Activated CD4-positive, alpha-beta memory T cell treated with anti-CD3 and anti-CD28 coated beads, Interleukin-2, amount 10 ng/mL, durations not matched to agents 7 days and 5 days (primary cell): ENCODE measurements at regions of chr20 and their contacts with region 1.

Region 1: GRCh38 chr20:45934586-45935415 is at the start of gene PCIF1:
- DNase-seq: peak; percentile 98
- H3K4me3 Mint-ChIP-seq: peak within 1 kb of the TSS; percentile 87
- H3K27ac Mint-ChIP-seq: peak within 1 kb of the TSS; percentile 96
- H3K4me1 Mint-ChIP-seq: peaks cover 29% of the 10 kb centered on the region
- H3K27me3 Mint-ChIP-seq: no peaks in the 10 kb centered on the region
- total RNA-seq, gene PCIF1: 44.2 to 45.7 TPM

Region 2: GRCh38 chr20:45685896-45686295 is 248.9 kb before region 1 on chr20:
- CTCF ChIA-PET with region 1: no interaction called
- POLR2A ChIA-PET with region 1: no interaction called
- DNase-seq: no peak
- H3K4me3 Mint-ChIP-seq: no peak overlapping the region
- H3K27ac Mint-ChIP-seq: no peak overlapping the region
- H3K4me1 Mint-ChIP-seq: no peaks in the 10 kb centered on the region
- H3K27me3 Mint-ChIP-seq: peaks cover 2% of the 10 kb centered on the region

Region 3: DNA sequence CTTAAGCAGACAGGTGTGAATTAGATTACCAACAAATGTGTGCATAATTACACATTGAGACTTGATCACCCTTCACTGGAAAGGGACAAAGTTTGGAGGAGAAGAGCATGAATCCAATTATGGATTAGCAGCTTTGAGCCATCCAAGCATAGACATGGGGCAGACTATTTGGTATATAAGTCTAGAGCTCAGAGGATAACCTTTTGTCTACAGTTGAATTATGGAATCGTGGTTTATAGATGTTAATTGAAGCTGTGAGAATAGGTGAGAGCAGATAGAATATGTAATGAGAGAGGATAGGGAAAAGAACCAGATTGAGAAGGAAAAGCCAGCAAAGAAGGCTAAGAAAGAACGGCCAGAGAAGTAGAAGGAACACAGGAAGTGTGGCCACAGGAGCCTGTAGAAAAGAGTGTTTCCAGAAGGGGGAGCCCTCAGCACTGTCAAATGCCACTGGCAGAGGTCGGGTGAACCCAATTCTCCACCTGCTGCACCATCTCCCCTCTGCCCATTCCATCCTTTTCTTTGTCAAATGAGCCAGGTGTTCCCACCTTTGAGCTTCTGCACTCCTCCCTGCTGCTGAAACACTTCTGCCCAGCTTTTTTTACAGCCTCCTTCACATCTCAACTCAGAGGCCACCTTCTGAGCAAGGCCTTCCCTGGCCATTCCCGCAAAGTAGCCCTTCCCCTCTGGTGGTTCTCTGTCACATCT is 135.7 kb before region 1 on chr20:
- CTCF ChIA-PET with region 1: interaction called, 14 read pairs
- POLR2A ChIA-PET with region 1: interaction called, 6 read pairs
- DNase-seq: peak; percentile 74
- H3K4me3 Mint-ChIP-seq: no peak overlapping the region
- H3K27ac Mint-ChIP-seq: peak overlapping the region; percentile 33
- H3K4me1 Mint-ChIP-seq: peaks cover 22% of the 10 kb centered on the region
- H3K27me3 Mint-ChIP-seq: no peaks in the 10 kb centered on the region

Region 4: GRCh38 chr20:45823949-45824835 is 110.6 kb before region 1 on chr20:
- CTCF ChIA-PET with region 1: interaction called, 6 read pairs
- POLR2A ChIA-PET with region 1: interaction called, 15 read pairs
- DNase-seq: peak; percentile 59
- H3K4me3 Mint-ChIP-seq: peak overlapping the region; percentile 66
- H3K27ac Mint-ChIP-seq: no peak overlapping the region
- H3K4me1 Mint-ChIP-seq: peaks cover 16% of the 10 kb centered on the region
- H3K27me3 Mint-ChIP-seq: peaks cover 30% of the 10 kb centered on the region

Region 5: GRCh38 chr20:45845452-45845851 is 89.3 kb before region 1 on chr20:
- CTCF ChIA-PET with region 1: no interaction called
- POLR2A ChIA-PET with region 1: no interaction called
- DNase-seq: no peak
- H3K4me3 Mint-ChIP-seq: no peak overlapping the region
- H3K27ac Mint-ChIP-seq: no peak overlapping the region
- H3K4me1 Mint-ChIP-seq: peaks cover 2% of the 10 kb centered on the region
- H3K27me3 Mint-ChIP-seq: no peaks in the 10 kb centered on the region

Region 6: GRCh38 chr20:45857114-45857881 is 77.5 kb before region 1 on chr20 and contains the starts of genes ACOT8 and ZSWIM3:
- CTCF ChIA-PET with region 1: no interaction called
- POLR2A ChIA-PET with region 1: interaction called, 37 read pairs
- DNase-seq: peak; percentile 96
- H3K4me3 Mint-ChIP-seq: peak within 1 kb of the TSS; percentile 98
- H3K27ac Mint-ChIP-seq: peak within 1 kb of the TSS; percentile 99
- H3K4me1 Mint-ChIP-seq: peaks cover 55% of the 10 kb centered on the region
- H3K27me3 Mint-ChIP-seq: no peaks in the 10 kb centered on the region
- total RNA-seq, gene ACOT8: 36.0 to 36.5 TPM
- total RNA-seq, gene ZSWIM3: 5.5 to 5.7 TPM

Region 7: GRCh38 chr20:45890985-45891983 is 43.5 kb before region 1 on chr20 and contains the starts of genes CTSA and NEURL2:
- CTCF ChIA-PET with region 1: no interaction called
- POLR2A ChIA-PET with region 1: interaction called, 42 read pairs
- DNase-seq: peak; percentile 87
- H3K4me3 Mint-ChIP-seq: peak within 1 kb of the TSS; percentile 88
- H3K27ac Mint-ChIP-seq: peak within 1 kb of the TSS; percentile 40
- H3K4me1 Mint-ChIP-seq: peaks cover 36% of the 10 kb centered on the region
- H3K27me3 Mint-ChIP-seq: peaks cover 5% of the 10 kb centered on the region
- total RNA-seq, gene CTSA: 64.3 to 64.6 TPM
- total RNA-seq, gene NEURL2: 1.0 to 1.6 TPM

Region 8: DNA sequence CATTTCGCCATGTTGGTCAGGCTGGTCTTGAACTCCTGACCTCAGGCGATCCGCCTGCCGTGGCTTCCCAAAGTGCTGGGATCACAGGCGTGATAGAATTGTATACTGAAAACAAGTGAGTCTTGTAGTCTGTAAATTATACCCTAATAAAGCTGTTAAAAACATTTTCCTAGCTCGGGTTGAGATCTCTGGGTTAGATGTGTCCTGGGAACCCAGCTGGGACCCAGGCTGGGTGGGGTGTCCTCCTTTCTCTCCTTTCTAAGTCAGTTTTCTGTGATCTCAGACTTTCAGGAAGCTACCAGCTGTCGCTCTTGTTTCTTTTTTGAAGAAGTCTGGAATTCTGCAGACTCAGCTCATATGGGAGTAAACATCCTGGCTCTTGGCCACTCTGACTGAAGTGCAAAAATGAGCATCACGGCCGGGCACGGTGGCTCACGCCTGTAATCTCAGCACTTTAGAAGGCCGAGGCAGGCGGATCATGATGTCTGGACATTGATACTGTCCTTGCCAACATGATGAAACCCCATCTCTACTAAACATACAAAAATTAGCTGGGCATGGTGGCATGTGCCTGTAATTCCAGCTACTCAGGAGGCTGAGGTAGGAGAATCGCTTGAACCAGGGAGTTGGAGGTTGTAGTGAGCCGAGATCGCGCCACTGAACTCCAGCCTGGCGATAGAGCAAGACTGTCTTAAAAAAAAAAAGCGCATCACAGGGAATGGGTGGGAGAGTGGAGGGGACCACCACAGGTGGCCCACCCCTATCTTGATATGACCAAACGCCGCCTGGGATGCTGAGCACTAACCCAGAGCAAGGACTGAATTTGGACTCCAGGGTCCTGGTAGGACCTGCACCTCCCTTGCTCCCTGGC is 10.2 kb before region 1 on chr20:
- CTCF ChIA-PET with region 1: interaction called, 4 read pairs
- POLR2A ChIA-PET with region 1: interaction called, 26 read pairs
- DNase-seq: no peak
- H3K4me3 Mint-ChIP-seq: no peak overlapping the region
- H3K27ac Mint-ChIP-seq: no peak overlapping the region
- H3K4me1 Mint-ChIP-seq: peaks cover 3% of the 10 kb centered on the region
- H3K27me3 Mint-ChIP-seq: peaks cover 20% of the 10 kb centered on the region

Region 9: DNA sequence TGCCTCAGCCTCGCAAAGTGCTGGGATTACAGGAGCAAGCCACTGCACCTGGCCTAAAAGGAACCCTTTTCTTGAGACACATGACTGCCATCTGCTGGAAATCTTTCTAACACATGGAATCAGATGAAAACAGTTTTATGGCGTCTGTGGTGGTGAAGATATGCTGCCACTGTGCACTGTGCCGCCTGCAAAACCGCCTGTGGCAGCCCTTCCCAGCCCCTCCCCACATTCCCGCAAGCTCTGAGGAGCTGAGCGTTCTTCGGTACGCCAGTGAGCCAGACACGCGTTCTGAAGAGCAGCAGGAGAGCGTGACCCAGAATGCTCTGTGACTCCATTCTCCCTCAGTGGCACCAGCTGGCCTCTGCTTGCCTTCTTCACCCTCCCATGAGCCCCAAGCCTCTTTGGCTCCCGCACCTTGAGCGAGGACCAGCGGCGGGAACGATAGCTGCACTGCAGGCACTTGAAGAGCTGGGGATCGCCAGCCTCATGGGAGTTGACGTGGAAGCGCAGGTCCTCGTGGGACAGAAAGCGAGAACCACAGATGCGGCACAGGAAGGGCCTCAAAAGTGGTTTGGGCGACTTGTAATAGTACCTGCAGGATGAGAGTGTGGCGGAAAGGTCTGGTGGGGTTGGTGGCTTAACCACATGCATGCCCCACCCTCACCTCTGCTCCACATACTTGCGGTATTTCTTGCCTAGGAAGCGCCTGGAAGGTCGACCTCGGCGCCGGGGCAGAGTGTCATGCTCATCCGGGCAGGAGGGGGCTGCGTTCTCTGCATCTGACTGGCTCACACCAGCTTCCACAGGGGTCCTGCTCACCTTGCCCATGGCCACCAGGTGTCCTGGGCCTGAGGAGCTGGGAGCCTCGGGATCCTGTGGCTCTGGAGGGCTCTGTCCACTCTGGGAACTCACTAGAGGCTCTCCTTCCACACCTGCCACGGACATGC is 28.5 kb after region 1 on chr20:
- CTCF ChIA-PET with region 1: interaction called, 5 read pairs
- POLR2A ChIA-PET with region 1: interaction called, 138 read pairs
- DNase-seq: no peak
- H3K4me3 Mint-ChIP-seq: no peak overlapping the region
- H3K27ac Mint-ChIP-seq: peak overlapping the region; percentile 69
- H3K4me1 Mint-ChIP-seq: peaks cover 21% of the 10 kb centered on the region
- H3K27me3 Mint-ChIP-seq: no peaks in the 10 kb centered on the region

Region 10: GRCh38 chr20:46051556-46052308 is 116.9 kb after region 1 on chr20:
- CTCF ChIA-PET with region 1: no interaction called
- POLR2A ChIA-PET with region 1: no interaction called
- DNase-seq: no peak
- H3K4me3 Mint-ChIP-seq: no peak overlapping the region
- H3K27ac Mint-ChIP-seq: no peak overlapping the region
- H3K4me1 Mint-ChIP-seq: no peaks in the 10 kb centered on the region
- H3K27me3 Mint-ChIP-seq: peaks cover 24% of the 10 kb centered on the region